Activated CD8-positive, alpha-beta memory T cell treated with anti-CD3 and anti-CD28 coated beads, Interleukin-2, amount 10 ng/mL, durations not matched to agents 7 days and 5 days (primary cell): ENCODE measurements at regions of chr16 and their contacts with region 1.

Region 1: GRCh38 chr16:67017810-67018488 is 11.0 kb upstream of the CBFB start:
- DNase-seq: peak; percentile 94
- ATAC-seq: peak; percentile 86
- H3K4me3 Mint-ChIP-seq: no peak overlapping the region
- H3K27ac Mint-ChIP-seq: peak overlapping the region; percentile 46
- H3K4me1 Mint-ChIP-seq: peaks cover 41% of the 10 kb centered on the region
- H3K27me3 Mint-ChIP-seq: no peaks in the 10 kb centered on the region

Region 2: GRCh38 chr16:66924527-66925321 is 93.2 kb before region 1 on chr16:
- CTCF ChIA-PET with region 1: no interaction called
- DNase-seq: peak; percentile 56
- ATAC-seq: peak; percentile 87
- H3K4me3 Mint-ChIP-seq: peak overlapping the region; percentile 60
- H3K27ac Mint-ChIP-seq: no peak overlapping the region
- H3K4me1 Mint-ChIP-seq: peaks cover 21% of the 10 kb centered on the region
- H3K27me3 Mint-ChIP-seq: peaks cover 46% of the 10 kb centered on the region

Region 3: GRCh38 chr16:66961065-66961744 is 56.7 kb before region 1 on chr16 and contains the start of gene CES3:
- CTCF ChIA-PET with region 1: interaction called, 19 read pairs
- DNase-seq: peak; percentile 84
- ATAC-seq: peak; percentile 96
- H3K4me3 Mint-ChIP-seq: peak within 1 kb of the TSS; percentile 56
- H3K27ac Mint-ChIP-seq: peak within 1 kb of the TSS; percentile 72
- H3K4me1 Mint-ChIP-seq: peaks cover 29% of the 10 kb centered on the region
- H3K27me3 Mint-ChIP-seq: no peaks in the 10 kb centered on the region
- total RNA-seq, gene CES3: 2.3 to 4.5 TPM

Region 4: DNA sequence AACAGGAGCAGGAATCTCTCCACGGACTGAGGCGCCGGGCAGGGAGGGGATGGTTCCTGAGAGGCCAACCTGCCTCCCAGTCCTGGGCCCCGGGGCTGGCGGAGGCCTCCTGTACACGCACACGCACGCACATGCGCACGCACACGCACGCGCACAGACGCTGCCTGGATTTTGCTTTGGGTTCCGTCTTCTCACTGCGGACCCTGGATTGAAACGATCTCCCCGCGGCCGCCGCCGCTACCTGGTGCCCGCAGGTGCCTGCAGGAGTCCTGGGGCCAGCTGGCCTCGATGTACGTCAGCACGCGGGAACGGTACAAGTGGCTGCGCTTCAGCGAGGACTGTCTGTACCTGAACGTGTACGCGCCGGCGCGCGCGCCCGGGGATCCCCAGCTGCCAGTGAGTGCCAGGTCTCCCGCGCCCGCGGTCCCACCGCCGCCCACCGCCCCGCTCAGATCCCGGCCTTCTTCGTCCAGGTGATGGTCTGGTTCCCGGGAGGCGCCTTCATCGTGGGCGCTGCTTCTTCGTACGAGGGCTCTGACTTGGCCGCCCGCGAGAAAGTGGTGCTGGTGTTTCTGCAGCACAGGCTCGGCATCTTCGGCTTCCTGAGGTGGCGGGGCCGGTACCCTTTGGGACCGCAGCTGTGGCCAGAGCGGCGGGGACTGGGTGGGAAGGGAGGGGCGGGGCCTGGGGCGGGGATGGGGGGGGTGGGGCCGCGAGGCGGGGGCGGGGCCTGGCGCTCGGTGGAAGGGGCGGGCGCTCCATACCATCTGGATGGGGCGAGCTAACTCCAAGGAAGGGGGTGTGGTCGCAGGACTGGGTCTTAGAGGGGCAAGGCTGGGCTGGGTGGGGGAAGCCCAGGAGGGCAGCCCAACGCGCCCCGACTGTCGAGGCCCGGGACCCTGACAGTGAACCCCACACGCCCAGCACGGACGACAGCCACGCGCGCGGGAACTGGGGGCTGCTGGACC is 17.3 kb before region 1 on chr16:
- CTCF ChIA-PET with region 1: interaction called, 26 read pairs
- DNase-seq: peak; percentile 71
- ATAC-seq: peak; percentile 68
- H3K4me3 Mint-ChIP-seq: peak overlapping the region; percentile 71
- H3K27ac Mint-ChIP-seq: peak overlapping the region; percentile 72
- H3K4me1 Mint-ChIP-seq: peaks cover 25% of the 10 kb centered on the region
- H3K27me3 Mint-ChIP-seq: no peaks in the 10 kb centered on the region

Region 5: DNA sequence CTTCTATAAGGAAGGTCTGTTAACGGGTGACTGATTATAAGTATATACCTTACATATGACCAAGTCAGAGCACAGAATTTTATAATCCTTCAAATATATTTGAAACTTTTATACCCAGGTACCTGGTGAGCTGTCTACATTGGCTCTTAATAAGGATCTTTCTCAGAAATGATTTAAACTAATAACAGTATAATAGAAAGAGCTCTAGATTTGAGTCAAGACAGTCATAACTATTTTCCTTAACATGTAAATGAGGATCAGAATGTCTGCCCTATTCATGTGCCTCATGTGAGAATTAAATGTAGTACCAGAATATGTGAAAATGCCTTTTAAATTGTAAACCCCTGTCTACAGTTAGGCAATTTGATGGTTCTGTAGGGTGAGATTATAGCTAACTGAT is 25.5 kb after region 1 on chr16:
- CTCF ChIA-PET with region 1: interaction called, 13 read pairs
- DNase-seq: no peak
- ATAC-seq: no peak
- H3K4me3 Mint-ChIP-seq: no peak overlapping the region
- H3K27ac Mint-ChIP-seq: no peak overlapping the region
- H3K4me1 Mint-ChIP-seq: peaks cover 38% of the 10 kb centered on the region
- H3K27me3 Mint-ChIP-seq: no peaks in the 10 kb centered on the region

Region 6: GRCh38 chr16:67109407-67110135 is 91.6 kb after region 1 on chr16 and contains the start of gene PHAF1:
- CTCF ChIA-PET with region 1: interaction called, 155 read pairs
- DNase-seq: peak; percentile 96
- ATAC-seq: peak; percentile 97
- H3K4me3 Mint-ChIP-seq: peak within 1 kb of the TSS; percentile 92
- H3K27ac Mint-ChIP-seq: peak within 1 kb of the TSS; percentile 74
- H3K4me1 Mint-ChIP-seq: peaks cover 33% of the 10 kb centered on the region
- H3K27me3 Mint-ChIP-seq: no peaks in the 10 kb centered on the region
- total RNA-seq, gene PHAF1: 14.2 to 15.2 TPM

Region 7: DNA sequence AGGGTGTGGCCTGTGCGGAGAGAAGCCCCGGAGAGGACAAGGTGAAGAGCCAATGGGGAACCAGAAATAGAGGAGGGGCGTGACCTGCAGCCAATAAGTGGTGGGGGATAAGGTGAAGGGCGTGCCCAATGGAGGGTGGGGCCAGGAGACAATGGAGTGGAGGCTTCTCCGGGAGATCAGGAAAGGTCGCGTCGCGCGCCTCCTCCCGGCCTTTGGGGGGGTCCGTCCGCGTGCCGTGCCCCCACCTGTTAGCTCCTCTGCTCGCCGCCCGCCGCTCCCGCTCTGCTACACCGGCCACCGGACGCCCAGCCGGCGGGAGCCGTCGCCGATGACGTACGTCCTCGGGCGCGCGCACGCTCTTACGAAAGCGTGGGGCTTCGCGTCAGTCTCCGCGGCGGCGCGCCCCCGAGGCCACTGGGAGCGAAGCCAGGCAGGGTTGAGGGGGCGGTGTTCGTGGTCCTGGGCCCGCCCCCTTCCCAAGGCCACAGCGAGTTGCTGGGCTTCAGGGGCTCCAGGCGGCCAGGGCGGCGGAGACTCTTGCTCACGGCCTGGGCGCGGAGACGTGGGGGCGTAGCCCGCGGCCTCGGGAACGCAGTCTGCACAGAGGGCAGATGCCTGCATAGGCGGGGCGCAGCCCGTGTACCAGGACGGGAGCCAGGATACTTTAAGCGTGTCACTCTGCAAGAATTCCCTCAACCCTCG is 165.8 kb after region 1 on chr16 and contains the start of gene MATCAP1:
- CTCF ChIA-PET with region 1: interaction called, 52 read pairs
- DNase-seq: peak; percentile 98
- ATAC-seq: peak; percentile 96
- H3K4me3 Mint-ChIP-seq: peak within 1 kb of the TSS; percentile 31
- H3K27ac Mint-ChIP-seq: no peak within 1 kb of the TSS
- H3K4me1 Mint-ChIP-seq: peaks cover 17% of the 10 kb centered on the region
- H3K27me3 Mint-ChIP-seq: peaks cover 18% of the 10 kb centered on the region
- total RNA-seq, gene MATCAP1: 38.6 to 56.0 TPM